HEK293 (cell line): ENCODE measurements at regions of chr15 and their contacts with region 1.

Region 1: DNA sequence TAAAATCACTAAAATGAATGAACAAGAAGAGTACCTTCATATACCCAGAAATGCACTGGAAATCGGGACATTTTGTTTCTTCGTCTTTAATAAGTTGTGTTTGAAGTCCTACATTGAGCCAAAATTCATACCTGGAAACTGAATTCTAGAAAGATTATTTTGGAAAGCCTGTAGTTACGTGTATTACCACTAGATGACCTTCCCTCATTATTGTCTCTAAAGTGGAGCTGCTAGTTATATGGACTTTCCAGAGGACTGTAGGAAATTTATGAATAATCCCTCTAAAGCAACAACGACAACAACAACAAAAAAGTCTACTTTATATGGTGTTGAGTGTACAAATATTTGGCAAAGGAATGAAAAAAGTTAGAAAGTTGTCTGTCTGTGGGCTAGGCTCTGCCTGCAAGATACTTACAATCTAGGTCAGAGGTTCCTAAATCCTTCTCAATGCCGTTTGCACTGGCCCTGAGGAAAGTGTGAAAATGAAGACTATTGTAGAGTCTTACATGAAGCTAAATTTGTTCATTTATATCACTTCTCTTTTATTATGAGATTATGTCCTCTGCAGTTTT is 234.8 kb upstream of the NR2E3 start:
- H3K4me3 ChIP-seq: no peak overlapping the region
- H3K27ac ChIP-seq: no peak overlapping the region
- H3K4me1 ChIP-seq: no peaks in the 10 kb centered on the region
- CTCF ChIP-seq: peak; percentile 50; the same call in 1 of the 2 replicates

Region 2: DNA sequence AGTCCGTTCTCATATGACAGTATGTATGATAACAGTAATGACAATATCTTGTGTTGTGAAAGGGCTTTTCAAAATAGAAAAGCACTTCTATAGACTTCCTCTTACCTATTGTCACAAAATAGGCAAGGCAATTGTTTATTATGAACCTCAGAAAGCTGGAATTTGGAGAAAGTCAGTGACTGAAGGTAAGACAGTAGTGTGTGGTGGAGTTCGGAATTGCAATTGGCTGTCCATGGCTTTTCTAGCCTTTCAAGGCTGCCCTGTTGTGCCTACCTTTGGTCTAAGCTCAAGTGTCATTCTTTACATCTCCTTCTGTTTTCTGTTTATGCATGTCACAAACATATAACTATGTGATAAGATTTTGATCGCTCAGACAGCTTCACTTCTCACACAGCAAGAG is 15.5 kb after region 1 on chr15:
- CTCF ChIA-PET with region 1: interaction called, 19 read pairs
- POLR2A ChIA-PET with region 1: no interaction called
- H3K4me3 ChIP-seq: no peak overlapping the region
- H3K27ac ChIP-seq: no peak overlapping the region
- H3K4me1 ChIP-seq: no peaks in the 10 kb centered on the region
- CTCF ChIP-seq: no peak

Region 3: DNA sequence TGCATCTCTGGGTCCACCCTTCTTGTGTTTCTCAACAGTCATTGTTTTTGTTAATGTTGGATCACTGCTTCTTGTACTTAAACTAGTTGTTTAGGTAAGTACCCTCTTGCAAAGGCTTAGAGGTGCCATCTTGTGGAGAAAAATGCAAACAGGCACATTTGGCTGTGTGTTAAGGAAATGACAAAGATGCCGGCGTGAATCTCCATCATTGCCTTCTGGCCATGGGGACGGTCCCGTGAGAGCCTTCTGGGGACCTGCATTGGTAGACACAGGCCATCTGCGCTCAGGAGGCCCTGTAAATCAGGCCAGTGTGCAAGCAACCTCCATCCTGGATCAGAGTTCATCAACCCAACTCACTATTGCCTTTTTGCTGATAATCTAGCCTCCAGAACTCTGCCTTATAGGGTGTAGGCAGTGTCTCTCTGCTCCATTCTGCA is 76.2 kb after region 1 on chr15:
- CTCF ChIA-PET with region 1: interaction called, 17 read pairs
- POLR2A ChIA-PET with region 1: no interaction called
- H3K4me3 ChIP-seq: no peak overlapping the region
- H3K27ac ChIP-seq: no peak overlapping the region
- H3K4me1 ChIP-seq: no peaks in the 10 kb centered on the region
- CTCF ChIP-seq: peak; percentile 75; the same call in 1 of the 2 replicates

Region 4: DNA sequence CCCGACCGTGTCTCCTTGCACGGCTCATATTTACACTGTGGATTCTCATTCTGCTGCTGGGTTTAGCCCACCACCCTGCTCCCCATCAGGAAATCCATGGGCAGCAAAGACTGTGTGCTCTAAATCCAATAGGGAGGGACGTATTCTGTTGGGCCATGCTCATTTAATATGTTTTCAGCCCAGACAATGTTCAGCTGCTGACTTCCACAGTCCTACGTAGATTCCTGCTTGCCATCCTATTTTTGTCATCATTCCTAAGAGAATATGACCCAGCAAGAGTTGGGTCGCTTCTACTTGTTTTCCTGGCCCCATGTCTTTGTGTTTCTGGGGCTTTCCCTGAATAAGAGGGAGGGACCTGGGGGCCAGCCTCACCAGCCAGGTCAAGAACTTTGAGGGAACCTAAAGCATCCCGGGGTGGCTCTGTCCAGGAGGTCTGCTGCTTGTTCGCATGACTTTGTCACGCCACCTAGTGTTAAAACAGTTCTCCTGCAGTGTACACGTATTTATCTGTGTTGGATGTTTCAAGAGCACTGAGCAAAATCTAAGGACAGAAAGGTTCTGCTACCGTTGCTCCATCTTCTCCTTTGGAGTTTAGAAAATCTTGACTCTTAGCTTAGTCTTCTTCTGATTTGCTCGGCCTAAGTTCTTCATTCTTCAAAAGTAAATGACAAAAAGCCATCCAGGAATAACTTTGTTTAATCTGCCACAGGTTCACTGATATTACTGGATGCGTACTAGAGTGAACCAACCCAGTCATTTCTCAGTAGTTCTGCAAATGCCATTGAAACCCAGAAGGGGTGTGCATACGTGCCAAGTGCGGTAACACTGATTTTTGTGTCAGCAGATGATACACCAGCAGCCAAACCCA is 155.0 kb after region 1 on chr15:
- CTCF ChIA-PET with region 1: interaction called, 93 read pairs
- POLR2A ChIA-PET with region 1: no interaction called
- H3K4me3 ChIP-seq: no peak overlapping the region
- H3K27ac ChIP-seq: no peak overlapping the region
- H3K4me1 ChIP-seq: no peaks in the 10 kb centered on the region
- CTCF ChIP-seq: peak; percentile 69

Region 5: GRCh38 chr15:71752604-71753289 is 177.2 kb after region 1 on chr15:
- CTCF ChIA-PET with region 1: interaction called, 18 read pairs
- POLR2A ChIA-PET with region 1: no interaction called
- H3K4me3 ChIP-seq: no peak overlapping the region
- H3K27ac ChIP-seq: no peak overlapping the region
- H3K4me1 ChIP-seq: peaks cover 14% of the 10 kb centered on the region
- CTCF ChIP-seq: peak; percentile 47; the same call in 1 of the 2 replicates